ENCODE measurements at regions of chr11 and their contacts with region 1.

Region 1: GRCh38 chr11:114262681-114263512 is 33.3 kb upstream of the NNMT start:
- DNase-seq: no peak
- H3K4me3 ChIP-seq: no peak overlapping the region
- H3K27ac ChIP-seq: no peak overlapping the region
- H3K4me1 ChIP-seq: peaks cover 48% of the 10 kb centered on the region
- H3K27me3 ChIP-seq: no peaks in the 10 kb centered on the region
- CTCF ChIP-seq: peak; percentile 76

Region 2: DNA sequence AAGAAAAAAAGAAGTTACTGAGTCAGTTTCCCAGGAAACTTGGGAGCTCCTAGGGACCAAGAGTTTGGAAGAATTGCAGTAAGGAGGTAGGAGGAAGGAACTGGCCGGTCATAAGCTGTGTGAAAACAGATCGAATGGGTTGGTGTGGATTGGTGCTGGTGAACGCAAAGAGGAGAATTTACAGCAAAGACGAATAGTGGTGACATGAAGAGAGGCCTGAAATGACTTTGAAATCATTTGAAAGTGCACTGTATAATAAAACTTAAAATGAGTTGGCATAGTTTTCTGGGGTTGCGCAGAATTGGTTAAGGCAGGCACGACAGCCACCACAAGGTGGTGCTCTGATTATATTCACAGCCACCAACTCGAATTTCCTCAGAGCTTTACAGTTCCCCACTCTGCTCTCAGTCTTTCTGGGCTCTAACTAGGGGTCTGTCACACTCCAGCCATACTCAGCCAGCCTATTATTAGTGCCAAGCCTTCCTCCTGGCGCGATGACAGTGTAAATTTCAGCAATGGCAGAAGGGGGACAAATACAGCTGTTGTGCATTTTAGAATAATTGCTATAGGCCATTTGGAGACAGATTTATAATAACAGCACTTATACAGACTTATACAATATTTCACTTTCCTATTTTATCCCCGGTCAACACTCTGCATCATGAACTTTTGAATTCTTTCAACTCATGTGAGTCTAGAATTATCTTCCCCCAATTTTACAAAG is 366.6 kb before region 1 on chr11:
- intact Hi-C with region 1: loop called (anchors 2 kb)
- DNase-seq: no peak
- H3K4me3 ChIP-seq: no peak overlapping the region
- H3K27ac ChIP-seq: no peak overlapping the region
- H3K4me1 ChIP-seq: peaks cover 21% of the 10 kb centered on the region
- H3K27me3 ChIP-seq: no peaks in the 10 kb centered on the region
- CTCF ChIP-seq: peak; percentile 82

Region 3: DNA sequence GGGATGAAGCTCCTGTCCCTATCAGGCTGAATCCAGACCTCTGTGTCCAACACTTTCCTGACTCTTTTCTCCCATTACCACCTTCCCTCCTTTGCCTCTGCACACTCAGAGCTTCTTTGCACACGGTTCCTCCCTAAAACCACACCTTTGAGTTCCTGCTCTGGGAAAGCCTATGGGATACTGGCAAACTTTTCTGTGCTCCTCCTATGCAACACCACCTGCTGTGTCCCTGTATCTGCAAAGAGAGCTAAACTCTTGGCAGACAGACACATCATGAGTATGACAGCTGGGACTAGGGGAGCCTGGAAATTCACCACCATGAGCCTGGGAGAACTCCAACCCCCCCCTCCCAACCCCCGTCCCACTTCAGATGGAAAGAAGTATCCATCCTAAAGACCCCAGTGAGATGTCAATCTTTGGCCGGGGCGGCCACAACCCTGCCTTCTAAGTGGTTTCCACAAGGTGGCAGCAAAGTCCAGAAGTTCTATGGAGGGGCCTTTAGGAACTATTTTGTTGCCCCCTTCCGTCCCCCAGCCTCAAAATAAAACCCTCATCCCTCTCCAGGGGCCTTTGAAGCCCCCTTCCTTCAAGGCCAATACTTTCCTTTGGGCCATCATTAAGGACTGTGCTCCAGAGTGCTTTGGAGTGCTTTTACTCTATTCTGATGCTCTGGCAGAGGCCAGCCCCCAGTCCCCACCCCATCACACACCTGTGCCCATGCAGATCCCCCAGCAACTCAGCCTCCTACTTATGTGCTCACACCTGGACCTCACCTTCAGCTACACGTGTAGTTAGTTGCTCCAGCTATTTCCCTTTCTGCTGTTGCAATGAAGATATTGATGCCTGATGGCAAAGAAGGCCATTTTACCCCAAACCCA is 268.6 kb before region 1 on chr11:
- intact Hi-C with region 1: loop called (anchors 2 kb)
- DNase-seq: no peak
- H3K4me3 ChIP-seq: no peak overlapping the region
- H3K27ac ChIP-seq: no peak overlapping the region
- H3K4me1 ChIP-seq: no peaks in the 10 kb centered on the region
- H3K27me3 ChIP-seq: peaks cover 70% of the 10 kb centered on the region
- CTCF ChIP-seq: peak; percentile 74

Region 4: DNA sequence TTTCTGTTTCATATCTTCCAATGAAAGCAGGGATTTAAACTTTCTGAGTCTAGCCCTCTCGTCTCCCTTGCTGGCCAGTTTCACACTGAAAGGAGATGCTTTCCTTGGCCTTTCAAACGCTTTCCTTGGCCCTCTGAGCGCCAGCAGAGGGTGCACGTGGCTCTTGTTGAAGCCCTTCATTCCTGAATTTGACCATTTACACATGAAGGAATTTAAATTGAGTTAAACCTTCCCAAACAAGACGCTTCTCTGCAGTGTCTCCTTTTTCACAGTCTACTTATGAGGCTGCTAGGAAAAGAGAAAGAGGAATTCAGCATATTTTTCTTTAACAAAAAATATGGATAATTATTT is 54.9 kb after region 1 on chr11:
- intact Hi-C with region 1: no loop called
- DNase-seq: peak; percentile 39
- H3K4me3 ChIP-seq: no peak overlapping the region
- H3K27ac ChIP-seq: peak overlapping the region; percentile 61
- H3K4me1 ChIP-seq: peaks cover 48% of the 10 kb centered on the region
- H3K27me3 ChIP-seq: no peaks in the 10 kb centered on the region
- CTCF ChIP-seq: peak; percentile 55